Motor neuron (in vitro differentiated cells): ENCODE measurements at regions of chr1 and their contacts with region 1.

Region 1: DNA sequence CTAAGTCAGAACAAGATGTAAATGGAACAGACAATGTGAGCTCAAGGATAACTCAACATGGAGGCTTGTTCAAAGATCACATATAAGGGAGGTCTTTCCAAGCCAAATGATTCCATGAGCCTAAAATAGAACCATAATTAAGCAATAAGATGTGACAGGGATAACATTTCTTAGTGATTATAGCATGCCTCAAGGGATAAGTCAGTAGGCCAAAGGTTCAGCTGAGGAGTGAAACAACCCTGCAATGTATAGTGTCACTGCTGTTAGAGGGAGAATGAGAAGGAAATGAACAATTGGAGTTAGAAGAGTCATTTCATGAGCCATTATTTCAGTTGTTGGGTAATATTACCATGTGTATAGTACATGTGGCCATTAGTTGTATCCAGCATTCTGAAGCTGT is 25.0 kb downstream of the GORAB start:
- ATAC-seq: peak in 4 of 8 experiments; percentile 11 to 70 (median 31)
- H3K4me3 ChIP-seq: no peak overlapping the region
- H3K27ac ChIP-seq: no peak overlapping the region
- H3K4me1 ChIP-seq: peaks cover 0 to 8% of the 10 kb centered on the region in 2 donors

Region 2: GRCh38 chr1:170664828-170665612 is 108.1 kb after region 1 on chr1:
- in situ Hi-C with region 1: loop called in 1 of 9 experiments (anchors 10 kb)
- ATAC-seq: peak; percentile 49 to 78 (median 76)
- H3K4me3 ChIP-seq: peak overlapping the region; percentile 18 to 41 (median 28)
- H3K27ac ChIP-seq: no peak overlapping the region
- H3K4me1 ChIP-seq: peaks cover 10 to 39% of the 10 kb centered on the region in 2 donors

Region 3: GRCh38 chr1:171781176-171781875 is 1224.4 kb after region 1 on chr1 and contains the start of gene METTL13:
- in situ Hi-C with region 1: no loop called
- ATAC-seq: peak; percentile 94 to 98 (median 97)
- H3K4me3 ChIP-seq: peak within 1 kb of the TSS; percentile 47 to 75 (median 53)
- H3K27ac ChIP-seq: peak within 1 kb of the TSS; percentile 81 to 84
- H3K4me1 ChIP-seq: peaks cover 6 to 9% of the 10 kb centered on the region in 2 donors
- total RNA-seq, gene METTL13: 16.9 to 75.8 (median 25.9) TPM